CD14-positive monocyte (primary cell): ENCODE measurements at regions of chr2 and their contacts with region 1.

Region 1: DNA sequence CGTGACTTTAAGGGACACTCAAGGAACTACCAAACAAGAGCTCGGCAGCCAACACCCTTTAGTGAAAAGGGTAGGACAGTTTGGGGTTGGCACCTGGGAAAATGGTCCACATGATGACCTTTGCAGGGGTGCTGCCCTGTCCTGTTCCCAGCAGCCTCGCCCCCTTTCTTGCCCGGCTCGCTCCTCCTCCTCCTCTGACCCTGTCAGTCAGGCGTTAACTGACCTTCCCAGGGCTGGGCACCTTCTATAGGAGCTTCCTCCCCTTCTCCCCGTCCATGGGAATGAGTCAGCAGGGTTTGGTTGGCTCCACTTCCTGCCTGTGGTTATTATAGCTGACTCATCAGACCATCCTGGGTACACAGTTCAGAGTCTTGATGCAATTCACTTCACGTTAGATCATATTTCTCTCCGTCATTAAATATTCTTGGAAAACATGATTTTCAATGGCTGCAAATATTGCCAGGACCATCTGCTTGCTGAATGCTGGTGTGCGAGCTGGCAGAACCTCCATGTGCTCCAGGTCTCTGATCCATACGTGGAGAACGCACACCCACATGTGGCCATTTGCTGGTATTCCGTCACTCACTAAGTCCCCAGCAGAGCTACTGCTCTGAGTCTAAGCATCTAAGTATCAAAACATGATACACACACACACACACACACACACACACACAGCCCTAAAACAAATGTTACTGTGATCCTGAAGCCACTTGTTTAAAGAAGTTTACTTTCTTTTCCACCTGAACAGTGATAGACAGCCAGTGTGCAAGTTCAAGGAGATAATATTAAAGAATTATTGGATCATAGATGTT is 185.0 kb downstream of the ANAPC1 start:
- DNase-seq: peak; percentile 94 to 98 (median 96)
- H3K4me3 ChIP-seq: peak overlapping the region; percentile 5 to 65 (median 30)
- H3K4me3 Mint-ChIP-seq: peak overlapping the region; percentile 67 to 90
- H3K27ac ChIP-seq: peak overlapping the region; percentile 79 to 85
- H3K27ac Mint-ChIP-seq: peak overlapping the region; percentile 95 to 99 (median 98)
- H3K4me1 ChIP-seq: peaks cover 54 to 58% of the 10 kb centered on the region in 2 donors
- H3K4me1 Mint-ChIP-seq: peaks cover 59% of the 10 kb centered on the region
- H3K27me3 ChIP-seq: no peaks in the 10 kb centered on the region
- H3K27me3 Mint-ChIP-seq: peaks cover 0 to 8% (median 1%) of the 10 kb centered on the region in 3 donors
- CTCF ChIP-seq: peak; percentile 18

Region 2: GRCh38 chr2:111120253-111121027 is 578.5 kb before region 1 on chr2 and contains the start of gene BCL2L11:
- intact Hi-C with region 1: loop called in 1 of 2 experiments (anchors 5 kb)
- DNase-seq: peak; percentile 87 to 90 (median 88)
- H3K4me3 ChIP-seq: peak within 1 kb of the TSS; percentile 89 to 98 (median 97)
- H3K4me3 Mint-ChIP-seq: peak within 1 kb of the TSS; percentile 95 to 98
- H3K27ac ChIP-seq: peak within 1 kb of the TSS; percentile 85 to 90
- H3K27ac Mint-ChIP-seq: peak within 1 kb of the TSS; percentile 88 to 94 (median 93)
- H3K4me1 ChIP-seq: peaks cover 60 to 63% of the 10 kb centered on the region in 2 donors
- H3K4me1 Mint-ChIP-seq: peaks cover 51% of the 10 kb centered on the region
- H3K27me3 ChIP-seq: peaks cover 33 to 51% of the 10 kb centered on the region in 2 donors
- H3K27me3 Mint-ChIP-seq: peaks cover 49 to 58% (median 51%) of the 10 kb centered on the region in 3 donors
- CTCF ChIP-seq: no peak
- polyA plus RNA-seq, gene BCL2L11: 8.8 to 27.6 (median 20.4) TPM

Region 3: GRCh38 chr2:111632661-111633060 is 66.3 kb before region 1 on chr2:
- intact Hi-C with region 1: loop called (anchors 5 to 10 kb)
- DNase-seq: peak; percentile 58 to 81 (median 62)
- H3K4me3 ChIP-seq: no peak overlapping the region
- H3K4me3 Mint-ChIP-seq: peak overlapping the region; percentile 16 to 69
- H3K27ac ChIP-seq: peak overlapping the region in 1 of 2 donors; percentile 80
- H3K27ac Mint-ChIP-seq: peak overlapping the region; percentile 85 to 89 (median 87)
- H3K4me1 ChIP-seq: peaks cover 23 to 33% of the 10 kb centered on the region in 2 donors
- H3K4me1 Mint-ChIP-seq: peaks cover 26% of the 10 kb centered on the region
- H3K27me3 ChIP-seq: no peaks in the 10 kb centered on the region
- H3K27me3 Mint-ChIP-seq: no peaks in the 10 kb centered on the region
- CTCF ChIP-seq: no peak

Region 4: DNA sequence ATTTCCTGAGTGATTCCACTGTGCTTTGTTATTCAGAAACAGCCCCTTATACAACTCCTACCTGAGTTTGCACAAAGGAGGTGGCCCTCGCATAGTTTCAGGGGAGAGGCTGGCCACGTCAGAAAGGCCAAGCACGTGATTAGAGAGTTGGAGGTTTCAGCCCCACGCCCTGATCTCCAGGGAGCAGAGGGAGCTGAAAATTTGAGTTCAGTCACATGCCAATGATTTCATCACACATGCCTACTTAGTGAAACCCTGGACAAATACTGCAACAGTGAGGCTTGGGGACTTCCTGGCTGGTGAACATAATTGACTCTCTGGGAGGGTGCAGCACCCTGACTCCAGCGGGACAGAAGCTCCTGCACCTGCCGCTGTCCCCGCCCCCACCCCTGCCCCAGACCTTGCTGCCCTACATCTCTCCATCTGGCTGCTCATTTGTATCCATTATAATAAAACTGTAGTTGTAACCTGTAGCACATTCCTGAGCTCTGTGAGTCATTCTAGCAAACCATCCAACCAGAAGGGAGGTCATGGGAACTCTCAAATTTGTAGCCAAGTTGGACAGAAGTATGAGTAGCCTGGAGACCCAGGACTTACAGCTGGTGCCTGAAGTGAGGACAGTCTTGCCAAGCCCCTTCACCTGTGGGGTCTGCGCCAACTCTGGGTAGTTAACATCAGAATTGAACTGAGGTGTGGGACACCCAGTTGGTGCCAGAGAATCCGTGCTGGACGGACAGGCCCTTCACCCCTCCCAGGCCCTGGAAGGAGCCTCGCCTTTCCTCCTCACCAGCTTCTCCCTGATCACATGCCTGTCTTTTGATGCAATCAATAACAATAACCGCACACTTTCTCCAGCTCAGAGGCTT is 39.3 kb before region 1 on chr2:
- intact Hi-C with region 1: loop called in 1 of 2 experiments (anchors 5 kb)
- DNase-seq: peak; percentile 90 to 97 (median 92)
- H3K4me3 ChIP-seq: peak overlapping the region in 1 of 3 experiments; percentile 11
- H3K4me3 Mint-ChIP-seq: peak overlapping the region in 1 of 2 donors; percentile 21
- H3K27ac ChIP-seq: peak overlapping the region; percentile 86 to 91
- H3K27ac Mint-ChIP-seq: peak overlapping the region; percentile 93 to 97 (median 95)
- H3K4me1 ChIP-seq: peaks cover 44 to 56% of the 10 kb centered on the region in 2 donors
- H3K4me1 Mint-ChIP-seq: peaks cover 58% of the 10 kb centered on the region
- H3K27me3 ChIP-seq: no peaks in the 10 kb centered on the region
- H3K27me3 Mint-ChIP-seq: peaks cover 0 to 5% (median 2%) of the 10 kb centered on the region in 3 donors
- CTCF ChIP-seq: no peak

Region 5: GRCh38 chr2:111678651-111679050 is 20.3 kb before region 1 on chr2:
- intact Hi-C with region 1: loop called in 1 of 2 experiments (anchors 2 kb)
- DNase-seq: peak in 2 of 3 donors; percentile 27 to 64
- H3K4me3 ChIP-seq: peak overlapping the region in 1 of 3 experiments; percentile 25
- H3K4me3 Mint-ChIP-seq: peak overlapping the region in 1 of 2 donors; percentile 53
- H3K27ac ChIP-seq: peak overlapping the region; percentile 55 to 77
- H3K27ac Mint-ChIP-seq: peak overlapping the region; percentile 87 to 97 (median 95)
- H3K4me1 ChIP-seq: peaks cover 43 to 54% of the 10 kb centered on the region in 2 donors
- H3K4me1 Mint-ChIP-seq: peaks cover 50% of the 10 kb centered on the region
- H3K27me3 ChIP-seq: no peaks in the 10 kb centered on the region
- H3K27me3 Mint-ChIP-seq: peaks cover 0 to 3% (median 0%) of the 10 kb centered on the region in 3 donors
- CTCF ChIP-seq: no peak

Region 6: GRCh38 chr2:112156152-112156986 is 457.4 kb after region 1 on chr2:
- intact Hi-C with region 1: no loop called
- DNase-seq: no peak
- H3K4me3 ChIP-seq: no peak overlapping the region
- H3K4me3 Mint-ChIP-seq: peak overlapping the region; percentile 63 to 84
- H3K27ac ChIP-seq: no peak overlapping the region
- H3K27ac Mint-ChIP-seq: peak overlapping the region in 1 of 7 donors; percentile 49
- H3K4me1 ChIP-seq: peaks cover 8 to 10% of the 10 kb centered on the region in 2 donors
- H3K4me1 Mint-ChIP-seq: peaks cover 15% of the 10 kb centered on the region
- H3K27me3 ChIP-seq: no peaks in the 10 kb centered on the region
- H3K27me3 Mint-ChIP-seq: peaks cover 0 to 5% (median 2%) of the 10 kb centered on the region in 3 donors
- CTCF ChIP-seq: no peak